Activated CD4-positive, alpha-beta T cell treated with anti-CD3 and anti-CD28 coated beads for 36 hours (primary cell): ENCODE measurements at regions of chr7 and their contacts with region 1.

Region 1: DNA sequence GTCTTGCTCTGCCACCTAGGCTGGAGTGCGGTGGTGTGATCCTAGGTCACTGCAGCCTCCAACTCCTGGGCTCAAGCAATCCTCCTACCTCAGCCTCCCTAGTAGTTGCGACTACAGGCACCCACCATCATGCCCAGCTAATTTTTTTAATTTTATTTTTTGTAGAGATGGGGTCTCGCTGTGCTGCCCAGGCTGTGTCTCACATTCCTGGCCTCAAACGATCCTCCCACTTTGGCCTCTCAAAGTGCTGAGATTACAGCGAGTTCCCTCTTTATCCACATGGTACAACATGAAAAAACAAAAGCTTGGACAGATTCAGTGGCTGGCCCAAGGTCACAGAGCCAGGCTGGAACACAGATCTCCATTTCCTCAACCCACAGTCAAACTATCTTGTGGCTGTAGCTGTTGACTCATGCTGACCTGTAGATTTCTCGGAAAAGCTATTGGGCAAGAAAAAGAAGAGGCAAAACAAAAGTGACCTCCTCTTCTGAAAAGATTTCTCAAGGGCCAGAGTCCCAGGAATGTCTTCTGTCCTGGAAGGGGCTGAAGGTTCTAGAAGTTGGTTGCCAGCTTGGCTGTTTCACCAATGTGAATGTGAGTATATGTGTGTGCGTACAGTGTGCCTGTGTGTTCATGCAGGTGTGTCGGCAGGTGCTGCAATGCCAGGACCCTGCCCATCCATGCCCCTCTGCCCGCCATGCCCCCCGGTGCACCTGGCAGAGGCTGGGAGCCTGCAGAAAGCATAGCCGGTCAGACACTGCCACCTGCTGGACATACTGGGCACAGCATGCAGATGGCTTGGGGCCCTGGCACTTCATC is 28.4 kb downstream of the TMEM130 start:
- DNase-seq: peak; percentile 81
- ATAC-seq: peak; percentile 78
- H3K4me3 Mint-ChIP-seq: no peak overlapping the region
- H3K27ac Mint-ChIP-seq: no peak overlapping the region
- H3K4me1 Mint-ChIP-seq: no peaks in the 10 kb centered on the region
- H3K27me3 Mint-ChIP-seq: peaks cover 10% of the 10 kb centered on the region

Region 2: GRCh38 chr7:98420966-98421612 is 420.3 kb before region 1 on chr7:
- CTCF ChIA-PET with region 1: interaction called, 12 read pairs
- POLR2A ChIA-PET with region 1: no interaction called
- intact Hi-C with region 1: loop called in 1 of 2 experiments (anchors 1 kb)
- DNase-seq: peak; percentile 80
- ATAC-seq: peak; percentile 60
- H3K4me3 Mint-ChIP-seq: no peak overlapping the region
- H3K27ac Mint-ChIP-seq: no peak overlapping the region
- H3K4me1 Mint-ChIP-seq: no peaks in the 10 kb centered on the region
- H3K27me3 Mint-ChIP-seq: peaks cover 8% of the 10 kb centered on the region

Region 3: GRCh38 chr7:98434095-98434494 is 407.3 kb before region 1 on chr7:
- CTCF ChIA-PET with region 1: interaction called, 18 read pairs
- POLR2A ChIA-PET with region 1: no interaction called
- intact Hi-C with region 1: loop called (anchors 1 kb)
- DNase-seq: no peak
- ATAC-seq: no peak
- H3K4me3 Mint-ChIP-seq: no peak overlapping the region
- H3K27ac Mint-ChIP-seq: no peak overlapping the region
- H3K4me1 Mint-ChIP-seq: peaks cover 4% of the 10 kb centered on the region
- H3K27me3 Mint-ChIP-seq: no peaks in the 10 kb centered on the region

Region 4: DNA sequence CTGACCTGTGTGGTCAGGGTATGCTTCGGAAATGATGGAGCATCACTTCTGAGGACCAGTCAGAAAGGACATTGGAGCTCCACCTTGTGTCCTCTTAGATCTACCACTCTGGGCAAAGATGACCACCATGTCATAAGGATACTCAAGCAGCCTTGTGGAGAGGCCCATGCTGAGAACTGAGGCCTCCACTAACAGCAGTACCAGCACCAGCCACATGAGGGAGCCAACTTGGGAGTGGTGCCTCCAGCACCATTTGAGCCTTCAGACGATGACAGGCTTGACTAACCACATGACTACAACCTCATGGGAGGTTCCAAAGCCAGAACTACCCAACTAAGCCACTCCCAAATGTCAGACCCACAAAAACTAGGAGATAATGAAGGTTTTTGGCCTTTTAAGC is 108.4 kb before region 1 on chr7:
- CTCF ChIA-PET with region 1: interaction called, 3 read pairs
- POLR2A ChIA-PET with region 1: interaction called, 3 read pairs
- intact Hi-C with region 1: loop called (anchors 1 kb)
- DNase-seq: peak; percentile 80
- ATAC-seq: peak; percentile 64
- H3K4me3 Mint-ChIP-seq: no peak overlapping the region
- H3K27ac Mint-ChIP-seq: no peak overlapping the region
- H3K4me1 Mint-ChIP-seq: no peaks in the 10 kb centered on the region
- H3K27me3 Mint-ChIP-seq: peaks cover 12% of the 10 kb centered on the region

Region 5: DNA sequence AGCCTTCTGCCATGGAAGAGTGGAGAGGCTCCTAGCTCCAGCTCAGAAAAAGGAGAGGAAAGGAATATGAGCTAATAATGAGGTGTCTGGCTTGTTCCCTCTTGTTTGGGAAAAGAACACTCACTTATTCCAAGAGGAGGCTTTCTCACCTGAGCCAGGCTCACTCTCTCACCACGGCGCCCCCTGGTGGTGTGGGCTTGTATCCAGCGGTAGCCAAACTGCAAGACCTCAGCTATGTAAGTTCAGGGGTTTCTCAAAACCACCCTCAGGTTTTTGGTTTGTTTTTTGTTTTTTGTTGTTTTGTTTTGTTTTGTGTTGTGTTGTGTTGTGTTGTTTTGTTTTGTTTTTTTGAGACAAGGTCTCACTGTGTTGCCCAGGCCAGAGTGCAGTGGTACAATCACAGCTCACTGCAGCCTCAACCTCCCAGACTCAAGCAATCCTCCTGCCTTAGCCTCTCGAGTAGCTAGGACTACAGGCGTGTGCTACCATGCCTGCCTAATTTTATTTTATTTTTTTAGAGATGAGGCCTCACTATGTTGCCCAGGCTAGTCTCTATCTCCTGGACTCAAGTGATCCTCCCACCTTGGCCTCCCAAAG is 95.6 kb before region 1 on chr7:
- CTCF ChIA-PET with region 1: interaction called, 11 read pairs
- POLR2A ChIA-PET with region 1: no interaction called
- intact Hi-C with region 1: loop called (anchors 5 kb)
- DNase-seq: peak; percentile 87
- ATAC-seq: peak; percentile 47
- H3K4me3 Mint-ChIP-seq: no peak overlapping the region
- H3K27ac Mint-ChIP-seq: no peak overlapping the region
- H3K4me1 Mint-ChIP-seq: no peaks in the 10 kb centered on the region
- H3K27me3 Mint-ChIP-seq: peaks cover 9% of the 10 kb centered on the region